ENCODE measurements at regions of chr7 and their contacts with region 1.

Region 1: DNA sequence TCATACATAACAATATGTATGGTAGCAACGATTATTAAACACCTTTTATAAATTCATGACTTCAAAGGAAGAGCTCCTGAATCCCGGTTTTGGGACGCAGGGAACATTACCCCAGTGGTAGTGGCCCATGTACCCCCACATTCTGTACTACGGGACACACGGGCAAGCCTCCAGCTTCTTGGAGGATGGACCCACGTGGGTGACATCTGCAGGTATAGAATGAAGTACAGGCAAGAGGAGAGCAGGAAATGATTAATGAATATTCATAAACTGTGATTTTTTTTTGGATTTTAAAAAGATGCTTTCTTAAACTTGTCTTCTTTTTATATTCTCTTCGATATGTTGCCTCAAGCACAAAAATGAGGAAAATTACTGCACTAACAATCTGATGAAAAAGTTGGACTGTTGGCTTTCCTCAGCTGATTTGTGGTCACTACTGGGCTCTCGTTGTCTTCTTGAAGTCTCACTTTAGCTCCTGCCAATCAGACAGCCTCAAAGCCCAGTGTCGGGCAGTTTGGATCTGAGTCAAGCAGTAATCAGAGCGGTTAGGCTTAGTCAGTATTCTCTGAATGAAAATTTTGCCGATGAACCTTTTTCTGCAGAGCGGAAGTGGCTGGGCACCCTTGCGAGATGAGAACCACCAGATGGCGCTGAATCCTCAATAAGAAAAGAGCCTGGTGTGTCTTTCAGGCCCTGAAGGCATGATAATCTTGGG is 157.7 kb upstream of the CDCA7L start:
- DNase-seq: peak; percentile 72 to 74
- H3K4me3 ChIP-seq: no peak overlapping the region
- H3K4me3 Mint-ChIP-seq: no peak overlapping the region
- H3K27ac Mint-ChIP-seq: no peak overlapping the region
- H3K4me1 ChIP-seq: no peaks in the 10 kb centered on the region
- H3K4me1 Mint-ChIP-seq: no peaks in the 10 kb centered on the region
- H3K27me3 ChIP-seq: no peaks in the 10 kb centered on the region
- H3K27me3 Mint-ChIP-seq: peaks cover 7% of the 10 kb centered on the region
- CTCF ChIP-seq: peak; percentile 79 to 84

Region 2: DNA sequence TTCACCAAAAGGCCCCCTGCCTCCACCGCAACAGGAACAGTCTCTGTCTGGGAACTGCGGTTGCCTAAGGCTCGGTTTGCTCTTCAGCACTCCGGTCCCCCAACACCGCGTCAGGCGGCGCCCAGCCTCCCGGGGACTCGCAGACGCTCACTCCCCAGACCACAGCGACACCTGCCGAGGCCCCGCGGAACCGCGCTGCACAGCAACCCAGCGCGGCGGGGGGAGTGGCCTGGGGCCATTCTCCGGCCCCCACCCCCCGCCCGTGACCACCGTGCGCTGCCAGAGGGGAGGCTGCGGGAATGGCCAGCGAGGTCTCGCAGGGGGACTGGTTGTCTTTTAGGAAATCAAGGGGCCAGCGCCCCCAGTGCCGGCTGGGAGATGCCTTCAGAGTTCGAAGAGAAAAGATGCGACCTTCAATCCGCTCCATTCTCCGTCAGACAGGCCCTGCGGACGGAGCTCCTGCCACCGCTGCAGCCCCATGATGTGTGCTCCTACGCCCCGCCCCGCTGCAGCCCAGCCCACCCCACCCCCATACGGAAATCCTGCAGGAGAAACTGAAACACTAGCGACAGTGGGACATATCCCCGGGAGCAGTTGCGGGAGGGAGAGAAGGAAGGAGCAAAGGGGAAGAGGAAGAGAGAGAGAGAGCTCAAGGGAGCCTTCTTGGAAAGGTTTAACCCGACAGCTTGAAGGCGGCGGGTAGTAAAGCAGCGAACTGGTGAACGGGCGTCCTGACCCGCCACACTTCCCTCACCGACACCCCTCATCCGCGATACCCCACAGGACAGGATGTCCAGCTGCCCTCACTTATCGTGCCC is 20.3 kb before region 1 on chr7:
- CTCF ChIA-PET with region 1: interaction called, 11 read pairs
- POLR2A ChIA-PET with region 1: no interaction called
- intact Hi-C with region 1: no loop called
- DNase-seq: peak; percentile 85 to 96
- H3K4me3 ChIP-seq: peak overlapping the region; percentile 56
- H3K4me3 Mint-ChIP-seq: peak overlapping the region; percentile 81
- H3K27ac Mint-ChIP-seq: peak overlapping the region; percentile 40
- H3K4me1 ChIP-seq: no peaks in the 10 kb centered on the region
- H3K4me1 Mint-ChIP-seq: peaks cover 6% of the 10 kb centered on the region
- H3K27me3 ChIP-seq: no peaks in the 10 kb centered on the region
- H3K27me3 Mint-ChIP-seq: peaks cover 7% of the 10 kb centered on the region
- CTCF ChIP-seq: peak; percentile 94 to 95

Region 3: GRCh38 chr7:22488643-22489462 is 385.4 kb after region 1 on chr7:
- CTCF ChIA-PET with region 1: interaction called, 3 read pairs
- POLR2A ChIA-PET with region 1: no interaction called
- intact Hi-C with region 1: loop called (anchors 1 kb)
- DNase-seq: peak; percentile 67 to 80
- H3K4me3 ChIP-seq: no peak overlapping the region
- H3K4me3 Mint-ChIP-seq: no peak overlapping the region
- H3K27ac Mint-ChIP-seq: no peak overlapping the region
- H3K4me1 ChIP-seq: no peaks in the 10 kb centered on the region
- H3K4me1 Mint-ChIP-seq: no peaks in the 10 kb centered on the region
- H3K27me3 ChIP-seq: no peaks in the 10 kb centered on the region
- H3K27me3 Mint-ChIP-seq: no peaks in the 10 kb centered on the region
- CTCF ChIP-seq: peak; percentile 81 to 88

Region 4: DNA sequence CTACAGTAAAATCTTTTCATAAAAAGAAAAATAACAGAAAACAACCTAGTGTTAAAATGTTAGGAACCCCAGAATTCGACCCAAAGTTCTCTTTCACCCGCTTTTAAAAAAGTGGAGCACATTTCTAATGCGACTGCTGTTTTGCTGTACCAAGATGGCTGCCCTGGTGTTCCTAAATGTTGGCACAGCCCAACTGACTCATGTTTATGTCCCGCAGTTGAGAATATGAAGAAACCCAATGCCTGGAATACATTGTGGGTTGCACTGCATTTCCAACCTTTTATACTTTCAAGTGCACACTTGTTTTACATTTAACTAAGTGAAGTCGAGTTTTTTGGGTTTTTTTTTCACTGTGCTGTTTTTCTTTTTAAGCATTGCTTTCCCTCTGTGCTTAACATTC is 395.6 kb after region 1 on chr7:
- CTCF ChIA-PET with region 1: no interaction called
- POLR2A ChIA-PET with region 1: no interaction called
- intact Hi-C with region 1: loop called (anchors 2 kb)
- DNase-seq: no peak
- H3K4me3 ChIP-seq: no peak overlapping the region
- H3K4me3 Mint-ChIP-seq: peak overlapping the region; percentile 72
- H3K27ac Mint-ChIP-seq: no peak overlapping the region
- H3K4me1 ChIP-seq: no peaks in the 10 kb centered on the region
- H3K4me1 Mint-ChIP-seq: no peaks in the 10 kb centered on the region
- H3K27me3 ChIP-seq: no peaks in the 10 kb centered on the region
- H3K27me3 Mint-ChIP-seq: peaks cover 4% of the 10 kb centered on the region
- CTCF ChIP-seq: no peak

Measured in Caco-2 (cell line).